ENCODE measurements at regions of chr11 and their contacts with region 1.

Region 1: DNA sequence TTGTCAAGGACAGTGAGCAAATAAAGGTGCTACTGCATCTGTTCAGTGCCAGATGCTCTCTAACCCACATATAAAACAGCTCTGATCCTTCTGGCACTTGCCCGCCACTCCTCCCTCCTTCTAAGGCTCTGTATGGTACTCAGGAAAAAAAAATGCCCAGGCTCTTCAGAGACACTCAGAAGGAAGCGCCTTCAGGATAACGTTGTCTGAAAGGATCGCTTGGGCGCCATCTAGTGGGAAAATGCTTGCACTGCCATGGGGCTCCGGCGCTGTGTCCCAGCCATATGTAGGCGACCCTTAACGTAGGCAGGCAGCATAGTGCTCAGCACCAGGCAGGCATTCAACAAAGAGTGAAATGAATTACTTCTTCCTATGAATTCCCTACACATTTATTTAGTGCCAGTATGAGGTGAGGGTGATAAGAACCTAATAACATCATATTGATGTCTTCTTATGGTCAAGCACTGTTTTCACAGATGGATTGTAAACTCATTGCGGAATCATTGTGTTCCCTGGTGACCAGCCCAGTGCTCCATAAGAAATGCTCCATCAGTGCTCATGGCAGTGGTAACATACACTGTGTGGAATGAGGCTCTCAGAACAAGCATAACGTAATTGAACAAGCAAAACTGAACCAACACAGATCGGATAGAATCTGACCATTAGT is 39.6 kb downstream of the PAMR1 start:
- DNase-seq: peak; percentile 59
- ATAC-seq: peak; percentile 73
- H3K4me3 Mint-ChIP-seq: no peak overlapping the region
- H3K27ac Mint-ChIP-seq: no peak overlapping the region
- H3K4me1 Mint-ChIP-seq: no peaks in the 10 kb centered on the region
- H3K27me3 Mint-ChIP-seq: peaks cover 22% of the 10 kb centered on the region
- CTCF ChIP-seq: peak; percentile 60

Region 2: GRCh38 chr11:34512840-34513681 is 972.7 kb before region 1 on chr11:
- CTCF ChIA-PET with region 1: no interaction called
- POLR2A ChIA-PET with region 1: no interaction called
- intact Hi-C with region 1: loop called (anchors 1 kb)
- DNase-seq: peak; percentile 44
- ATAC-seq: peak; percentile 99
- H3K4me3 Mint-ChIP-seq: no peak overlapping the region
- H3K27ac Mint-ChIP-seq: no peak overlapping the region
- H3K4me1 Mint-ChIP-seq: no peaks in the 10 kb centered on the region
- H3K27me3 Mint-ChIP-seq: no peaks in the 10 kb centered on the region
- CTCF ChIP-seq: peak; percentile 35

Region 3: GRCh38 chr11:35675901-35676610 is 190.3 kb after region 1 on chr11:
- CTCF ChIA-PET with region 1: no interaction called
- POLR2A ChIA-PET with region 1: interaction called, 10 read pairs
- intact Hi-C with region 1: no loop called
- DNase-seq: no peak
- ATAC-seq: no peak
- H3K4me3 Mint-ChIP-seq: no peak overlapping the region
- H3K27ac Mint-ChIP-seq: peak overlapping the region; percentile 8
- H3K4me1 Mint-ChIP-seq: peaks cover 87% of the 10 kb centered on the region
- H3K27me3 Mint-ChIP-seq: no peaks in the 10 kb centered on the region
- CTCF ChIP-seq: no peak

Region 4: DNA sequence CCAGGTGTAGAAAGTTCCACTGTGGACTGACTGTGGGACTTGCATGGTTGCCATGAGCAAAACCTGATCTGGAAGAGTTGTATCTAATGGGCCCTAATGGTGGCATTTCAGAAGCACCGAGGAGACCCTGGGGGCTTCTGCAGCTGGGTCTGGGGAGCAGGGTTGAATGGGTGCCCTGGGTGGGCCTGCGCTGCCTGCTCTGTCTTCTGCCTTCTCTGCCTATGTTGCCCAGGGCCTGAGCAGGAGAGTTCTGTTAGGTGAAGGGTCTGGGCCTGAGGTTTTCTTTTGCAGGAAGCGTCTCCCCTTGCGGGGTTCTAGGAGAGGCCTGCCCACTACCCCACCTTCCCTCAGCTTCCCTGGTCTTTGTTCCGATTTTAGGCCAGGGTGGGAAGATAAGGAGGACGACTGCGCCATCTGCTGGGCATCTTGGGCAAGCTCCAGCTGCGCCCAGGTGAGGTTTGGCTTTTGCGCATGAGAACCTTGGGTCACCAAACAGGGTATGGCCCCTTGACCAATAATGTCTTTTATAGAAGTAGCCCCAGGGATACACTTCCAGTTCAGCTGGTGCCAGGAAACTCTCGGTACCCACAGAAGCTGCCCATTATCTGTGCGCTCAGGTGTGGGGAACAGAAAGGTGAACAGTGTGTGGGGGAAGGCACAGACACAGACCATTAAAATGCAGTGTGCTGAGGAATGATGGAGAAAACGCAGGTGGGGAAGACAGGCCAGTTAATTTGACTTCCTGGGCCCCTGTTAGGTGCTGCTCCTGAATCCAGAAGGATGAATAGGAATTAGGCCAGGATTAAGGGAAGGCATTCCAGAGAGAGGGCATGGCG is 780.2 kb after region 1 on chr11:
- CTCF ChIA-PET with region 1: no interaction called
- POLR2A ChIA-PET with region 1: no interaction called
- intact Hi-C with region 1: loop called (anchors 5 kb)
- DNase-seq: peak; percentile 52
- ATAC-seq: peak; percentile 72
- H3K4me3 Mint-ChIP-seq: no peak overlapping the region
- H3K27ac Mint-ChIP-seq: no peak overlapping the region
- H3K4me1 Mint-ChIP-seq: no peaks in the 10 kb centered on the region
- H3K27me3 Mint-ChIP-seq: peaks cover 10% of the 10 kb centered on the region
- CTCF ChIP-seq: no peak

Measured in activated B cell treated with CpG ODN at 0.5 μM for 24 hours (primary cell).